ENCODE measurements at regions of chr6 and their contacts with region 1.

Region 1: GRCh38 chr6:36979347-36979742 is 6.7 kb downstream of the MTCH1 start:
- DNase-seq: peak; percentile 65 to 96 (median 78)

Region 2: DNA sequence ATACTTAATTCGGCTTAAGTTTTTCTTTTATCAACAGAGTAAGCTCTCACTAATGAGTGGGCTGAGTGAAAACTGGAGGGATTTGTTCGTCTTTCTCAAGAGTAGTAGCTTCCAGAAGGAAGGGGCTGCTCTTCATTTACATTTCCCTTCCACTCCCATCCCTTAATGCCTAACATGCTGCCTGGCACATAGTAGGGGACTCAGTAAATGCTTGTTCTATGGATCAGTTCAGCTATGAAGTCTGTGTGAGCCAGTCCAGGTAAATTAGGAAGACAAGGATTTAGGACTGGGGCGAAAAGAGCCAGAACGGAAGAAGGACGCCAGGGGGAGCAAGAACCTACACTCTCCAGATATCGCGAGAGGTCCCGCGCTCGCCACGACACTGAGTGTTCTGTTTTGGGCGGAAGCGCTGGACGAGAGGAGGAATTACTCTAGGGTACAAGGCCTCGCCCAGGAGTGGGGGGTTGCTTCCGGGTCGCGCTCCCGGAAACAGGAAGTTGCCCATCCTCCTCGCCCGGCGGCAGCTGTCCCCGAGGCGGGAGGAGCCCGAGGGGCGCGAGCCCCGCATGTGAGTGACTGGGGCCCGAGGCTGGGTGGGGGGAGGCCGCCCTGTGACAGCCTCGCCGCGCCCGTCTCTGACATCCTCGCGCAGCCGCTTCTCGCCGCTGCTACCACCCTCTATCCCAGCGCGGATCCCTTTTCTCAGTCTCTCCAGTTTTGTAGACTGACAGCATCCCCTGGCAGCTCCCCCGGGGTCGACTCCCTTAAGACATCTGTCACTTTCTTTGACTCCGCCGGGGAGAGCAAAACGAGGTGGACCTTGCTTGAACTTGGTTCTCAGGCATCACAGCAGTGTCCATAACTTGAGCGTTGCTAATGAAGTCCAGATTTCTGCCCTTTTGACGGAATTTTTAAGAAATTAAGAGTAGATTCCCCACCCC is 93.6 kb before region 1 on chr6 and contains the start of gene C6orf89:
- intact Hi-C with region 1: loop called (anchors 1 kb)
- DNase-seq: peak; percentile 97 to 100 (median 98)

Measured in posterior cingulate gyrus (tissue), 11 donors.